Caco-2 (cell line): ENCODE measurements at regions of chr6 and their contacts with region 1.

Region 1: DNA sequence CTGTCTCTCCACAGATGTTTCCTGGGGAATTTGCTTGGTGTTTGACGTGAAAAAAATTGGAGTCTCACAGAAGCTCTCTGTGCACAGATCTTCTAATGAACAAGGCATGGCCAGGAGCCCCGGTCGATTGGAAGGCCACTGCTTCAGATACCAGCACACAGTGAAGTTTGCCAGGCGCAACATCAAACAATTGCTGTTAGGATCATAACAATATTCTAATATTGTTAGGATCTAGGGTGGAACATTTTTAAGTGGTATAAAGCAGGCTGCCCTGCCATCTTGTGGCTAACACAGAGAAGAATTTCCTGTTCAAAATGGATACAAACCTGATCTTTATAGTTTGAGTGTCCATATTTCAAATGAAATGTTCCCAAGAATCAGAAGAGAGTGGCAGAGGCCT is 64.1 kb downstream of the C6orf118 start:
- DNase-seq: peak in 1 of 2 experiments; percentile 15
- H3K4me3 ChIP-seq: no peak overlapping the region
- H3K4me3 Mint-ChIP-seq: no peak overlapping the region
- H3K27ac Mint-ChIP-seq: no peak overlapping the region
- H3K4me1 ChIP-seq: no peaks in the 10 kb centered on the region
- H3K4me1 Mint-ChIP-seq: no peaks in the 10 kb centered on the region
- H3K27me3 ChIP-seq: no peaks in the 10 kb centered on the region
- H3K27me3 Mint-ChIP-seq: peaks cover 9% of the 10 kb centered on the region
- CTCF ChIP-seq: peak; percentile 30 to 34

Region 2: GRCh38 chr6:164897523-164898235 is 347.6 kb before region 1 on chr6:
- CTCF ChIA-PET with region 1: no interaction called
- POLR2A ChIA-PET with region 1: no interaction called
- intact Hi-C with region 1: loop called (anchors 1 kb)
- DNase-seq: peak in 1 of 2 experiments; percentile 4
- H3K4me3 ChIP-seq: no peak overlapping the region
- H3K4me3 Mint-ChIP-seq: no peak overlapping the region
- H3K27ac Mint-ChIP-seq: no peak overlapping the region
- H3K4me1 ChIP-seq: no peaks in the 10 kb centered on the region
- H3K4me1 Mint-ChIP-seq: no peaks in the 10 kb centered on the region
- H3K27me3 ChIP-seq: no peaks in the 10 kb centered on the region
- H3K27me3 Mint-ChIP-seq: no peaks in the 10 kb centered on the region
- CTCF ChIP-seq: no peak

Region 3: GRCh38 chr6:165184192-165184979 is 60.9 kb before region 1 on chr6:
- CTCF ChIA-PET with region 1: no interaction called
- POLR2A ChIA-PET with region 1: no interaction called
- intact Hi-C with region 1: no loop called
- DNase-seq: no peak
- H3K4me3 ChIP-seq: no peak overlapping the region
- H3K4me3 Mint-ChIP-seq: no peak overlapping the region
- H3K27ac Mint-ChIP-seq: no peak overlapping the region
- H3K4me1 ChIP-seq: no peaks in the 10 kb centered on the region
- H3K4me1 Mint-ChIP-seq: no peaks in the 10 kb centered on the region
- H3K27me3 ChIP-seq: no peaks in the 10 kb centered on the region
- H3K27me3 Mint-ChIP-seq: no peaks in the 10 kb centered on the region
- CTCF ChIP-seq: no peak

Region 4: GRCh38 chr6:165204807-165205545 is 40.3 kb before region 1 on chr6:
- CTCF ChIA-PET with region 1: no interaction called
- POLR2A ChIA-PET with region 1: no interaction called
- intact Hi-C with region 1: no loop called
- DNase-seq: no peak
- H3K4me3 ChIP-seq: no peak overlapping the region
- H3K4me3 Mint-ChIP-seq: no peak overlapping the region
- H3K27ac Mint-ChIP-seq: no peak overlapping the region
- H3K4me1 ChIP-seq: no peaks in the 10 kb centered on the region
- H3K4me1 Mint-ChIP-seq: no peaks in the 10 kb centered on the region
- H3K27me3 ChIP-seq: no peaks in the 10 kb centered on the region
- H3K27me3 Mint-ChIP-seq: no peaks in the 10 kb centered on the region
- CTCF ChIP-seq: no peak

Region 5: DNA sequence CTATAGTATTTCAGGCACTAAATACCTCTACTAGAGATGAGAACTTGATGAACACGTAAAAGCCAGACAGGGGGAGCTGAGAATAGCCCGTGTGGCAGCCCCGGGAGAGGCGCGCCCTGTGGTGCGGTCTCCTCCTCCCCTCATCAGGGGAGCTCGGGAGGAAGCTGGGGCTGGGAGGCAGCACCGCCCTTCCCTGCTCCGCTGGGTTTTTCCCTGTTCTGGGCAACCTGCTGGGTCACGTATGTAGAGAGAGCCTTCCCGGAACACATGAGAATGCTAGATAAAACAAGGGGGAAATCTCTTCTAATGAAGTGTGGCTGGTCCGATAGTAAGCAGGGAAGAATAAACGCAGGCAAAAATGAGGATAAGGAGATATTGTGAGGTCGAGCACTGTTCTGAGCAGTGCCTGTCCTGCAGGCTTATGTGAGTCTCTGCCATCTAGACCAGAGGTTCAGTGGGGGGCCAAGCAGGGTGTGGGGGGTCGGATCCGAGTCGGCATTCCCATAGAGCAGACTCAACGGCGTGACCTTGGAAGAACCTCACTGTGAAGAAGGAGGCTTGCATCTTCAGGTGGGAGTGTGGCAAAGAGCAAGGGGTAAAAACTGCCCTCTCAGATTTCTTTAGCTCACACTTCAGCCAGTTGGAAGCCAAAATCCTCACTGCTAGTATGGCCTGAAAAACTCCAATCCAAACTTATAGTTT is 1395.2 kb after region 1 on chr6:
- CTCF ChIA-PET with region 1: no interaction called
- POLR2A ChIA-PET with region 1: no interaction called
- intact Hi-C with region 1: no loop called
- DNase-seq: no peak
- H3K4me3 ChIP-seq: no peak overlapping the region
- H3K4me3 Mint-ChIP-seq: no peak overlapping the region
- H3K27ac Mint-ChIP-seq: no peak overlapping the region
- H3K4me1 ChIP-seq: no peaks in the 10 kb centered on the region
- H3K4me1 Mint-ChIP-seq: no peaks in the 10 kb centered on the region
- H3K27me3 ChIP-seq: no peaks in the 10 kb centered on the region
- H3K27me3 Mint-ChIP-seq: peaks cover 32% of the 10 kb centered on the region
- CTCF ChIP-seq: no peak